Activated B cell treated with CpG ODN at 0.5 μM for 24 hours (primary cell): ENCODE measurements at regions of chr10 and their contacts with region 1.

Region 1: DNA sequence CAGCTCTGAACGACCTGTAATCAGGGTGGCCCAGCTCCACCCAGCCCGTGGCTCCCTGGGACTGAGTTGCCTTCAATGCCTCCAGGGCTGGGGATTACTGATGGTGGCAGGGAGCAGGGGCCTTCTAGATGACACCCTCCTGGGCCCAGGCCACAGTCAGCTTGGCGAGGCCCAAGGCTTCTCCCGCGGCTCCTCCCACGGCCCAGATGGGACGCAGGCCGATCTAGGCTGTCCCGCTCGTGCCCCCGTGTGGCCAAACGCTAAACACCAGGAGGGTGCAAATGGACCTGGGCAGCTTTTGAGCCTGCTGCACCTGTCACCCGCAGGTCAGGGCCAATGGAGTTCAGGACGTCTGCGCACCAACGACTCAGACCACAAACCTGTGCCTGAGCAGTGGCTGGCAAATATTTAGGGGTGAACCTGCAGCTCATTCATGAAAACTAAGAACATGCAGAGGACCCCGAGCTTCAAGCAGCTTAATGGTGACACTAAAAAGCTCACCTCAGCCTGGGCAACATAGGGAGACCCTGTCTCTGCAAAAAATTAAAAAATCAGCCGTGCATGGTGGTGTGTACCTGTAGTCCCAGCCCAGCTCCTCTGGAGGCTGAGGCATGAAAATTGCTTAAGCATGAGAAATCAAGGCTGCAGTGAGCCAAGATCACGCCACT is 43.2 kb downstream of the ASB13 start:
- DNase-seq: peak; percentile 75
- ATAC-seq: peak; percentile 99
- H3K4me3 Mint-ChIP-seq: no peak overlapping the region
- H3K27ac Mint-ChIP-seq: no peak overlapping the region
- H3K4me1 Mint-ChIP-seq: peaks cover 4% of the 10 kb centered on the region
- H3K27me3 Mint-ChIP-seq: no peaks in the 10 kb centered on the region
- CTCF ChIP-seq: no peak

Region 2: DNA sequence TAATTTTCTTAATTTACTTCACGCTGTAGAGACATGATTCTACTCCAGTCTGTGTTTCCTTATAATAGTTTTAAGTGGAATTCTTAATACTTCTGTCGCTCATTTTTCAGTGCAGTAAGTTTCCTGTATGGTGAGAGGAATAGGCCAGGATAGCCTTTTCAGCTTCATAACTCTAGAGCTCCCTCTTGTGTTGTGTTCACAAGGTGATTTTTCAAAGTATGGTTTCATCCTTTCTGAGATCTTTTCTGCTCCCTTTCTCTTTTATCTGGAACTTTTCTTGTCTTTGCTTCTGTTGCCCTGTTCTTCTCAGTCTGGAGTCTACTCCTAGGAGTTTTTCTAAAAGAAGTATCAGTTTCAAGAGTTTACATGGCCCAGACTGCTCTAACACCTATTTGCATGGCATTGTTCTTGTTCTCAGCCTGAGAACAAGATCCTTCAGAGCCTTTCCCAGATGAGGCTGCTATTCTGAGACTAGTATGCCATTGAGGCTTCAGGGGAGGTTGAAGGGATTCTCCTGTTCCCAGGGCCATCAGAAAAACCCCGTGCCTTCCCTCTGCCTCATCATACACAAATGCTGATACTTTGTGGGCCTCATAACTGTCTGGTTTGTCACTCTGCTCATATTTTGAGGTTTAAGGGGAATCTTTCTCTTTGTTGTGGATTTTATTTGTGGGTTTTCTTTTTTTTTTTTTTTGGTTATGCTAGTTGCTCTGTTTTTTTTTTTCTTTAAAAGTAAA is 189.0 kb before region 1 on chr10:
- CTCF ChIA-PET with region 1: interaction called, 431 read pairs
- POLR2A ChIA-PET with region 1: no interaction called
- intact Hi-C with region 1: no loop called
- DNase-seq: no peak
- ATAC-seq: no peak
- H3K4me3 Mint-ChIP-seq: no peak overlapping the region
- H3K27ac Mint-ChIP-seq: no peak overlapping the region
- H3K4me1 Mint-ChIP-seq: no peaks in the 10 kb centered on the region
- H3K27me3 Mint-ChIP-seq: no peaks in the 10 kb centered on the region
- CTCF ChIP-seq: no peak

Region 3: GRCh38 chr10:5461914-5462840 is 161.0 kb before region 1 on chr10:
- CTCF ChIA-PET with region 1: interaction called, 13 read pairs
- POLR2A ChIA-PET with region 1: no interaction called
- intact Hi-C with region 1: no loop called
- DNase-seq: no peak
- ATAC-seq: peak; percentile 68
- H3K4me3 Mint-ChIP-seq: no peak overlapping the region
- H3K27ac Mint-ChIP-seq: no peak overlapping the region
- H3K4me1 Mint-ChIP-seq: peaks cover 15% of the 10 kb centered on the region
- H3K27me3 Mint-ChIP-seq: no peaks in the 10 kb centered on the region
- CTCF ChIP-seq: no peak

Region 4: GRCh38 chr10:5583525-5584175 is 39.6 kb before region 1 on chr10:
- CTCF ChIA-PET with region 1: interaction called, 19 read pairs
- POLR2A ChIA-PET with region 1: interaction called, 3 read pairs
- intact Hi-C with region 1: loop called (anchors 2 kb)
- DNase-seq: no peak
- ATAC-seq: peak; percentile 45
- H3K4me3 Mint-ChIP-seq: peak overlapping the region; percentile 58
- H3K27ac Mint-ChIP-seq: peak overlapping the region; percentile 41
- H3K4me1 Mint-ChIP-seq: peaks cover 50% of the 10 kb centered on the region
- H3K27me3 Mint-ChIP-seq: peaks cover 11% of the 10 kb centered on the region
- CTCF ChIP-seq: no peak

Region 5: DNA sequence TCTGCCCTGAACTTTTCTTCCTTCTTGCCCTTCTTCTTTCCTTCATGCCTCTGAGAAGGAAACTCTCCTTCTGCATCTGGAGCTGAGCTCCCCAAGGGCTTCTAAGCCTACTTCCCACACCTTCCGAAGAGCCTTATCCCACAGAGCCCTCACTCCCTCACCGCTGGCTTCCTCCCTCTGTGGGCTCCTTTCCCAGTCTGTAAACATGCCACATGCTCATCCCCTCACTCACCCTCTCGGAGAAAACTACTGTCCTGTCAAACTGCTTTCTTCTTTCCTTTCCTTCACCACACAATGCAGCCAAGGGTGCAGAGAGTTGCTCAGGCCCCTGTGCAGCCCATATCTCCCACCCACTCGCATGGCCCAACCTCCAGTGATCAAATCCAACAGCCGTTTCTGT is 248.4 kb after region 1 on chr10:
- CTCF ChIA-PET with region 1: no interaction called
- POLR2A ChIA-PET with region 1: no interaction called
- intact Hi-C with region 1: no loop called
- DNase-seq: no peak
- ATAC-seq: no peak
- H3K4me3 Mint-ChIP-seq: no peak overlapping the region
- H3K27ac Mint-ChIP-seq: peak overlapping the region; percentile 21
- H3K4me1 Mint-ChIP-seq: peaks cover 40% of the 10 kb centered on the region
- H3K27me3 Mint-ChIP-seq: no peaks in the 10 kb centered on the region
- CTCF ChIP-seq: no peak